Endothelial cell of umbilical vein (primary cell): ENCODE measurements at regions of chr3 and their contacts with region 1.

Region 1: DNA sequence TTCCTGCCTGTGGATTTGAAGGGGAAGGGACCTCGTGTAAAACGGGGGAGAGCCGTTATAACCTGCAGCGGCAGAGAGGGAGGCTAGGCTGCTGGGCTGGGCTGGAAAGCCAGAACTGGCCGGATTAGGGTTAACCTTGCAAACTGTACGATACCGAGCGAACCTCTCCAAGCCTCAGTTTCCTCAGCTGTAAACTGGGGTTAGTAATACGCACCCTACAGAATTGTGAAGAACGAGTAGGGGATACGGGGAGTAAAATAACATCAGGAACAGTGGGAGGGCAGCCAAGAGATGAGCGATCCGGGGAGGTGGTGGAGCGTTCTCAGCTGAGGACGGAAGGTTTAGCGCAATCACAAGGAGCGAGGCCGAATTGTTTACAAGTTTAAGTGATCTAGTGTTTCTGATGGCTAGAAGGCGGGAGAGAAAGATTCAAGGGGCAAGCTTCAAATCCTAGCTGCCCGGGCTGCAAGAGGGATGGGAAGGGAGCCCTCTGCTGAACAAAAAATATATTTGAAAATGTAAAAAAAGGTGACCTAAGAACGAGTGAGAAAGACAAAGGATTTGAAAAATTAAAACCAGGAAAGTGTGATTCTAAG is 768 bp upstream of the SEMA5B start:
- DNase-seq: peak; percentile 67
- H3K4me3 ChIP-seq: peak overlapping the region; percentile 18 to 20 (median 20)
- H3K27ac ChIP-seq: no peak overlapping the region
- H3K4me1 ChIP-seq: peaks cover 17% of the 10 kb centered on the region
- H3K27me3 ChIP-seq: peaks cover 72 to 90% of the 10 kb centered on the region in 2 experiments
- CTCF ChIP-seq: peak; percentile 32 to 40
- POLR2A ChIP-seq: no peak

Region 2: GRCh38 chr3:122392868-122393844 is 635.2 kb before region 1 on chr3:
- CTCF ChIA-PET with region 1: interaction called, 31 read pairs
- POLR2A ChIA-PET with region 1: no interaction called
- dilution Hi-C with region 1: no loop called
- intact Hi-C with region 1: loop called (anchors 2 kb)
- DNase-seq: peak; percentile 56
- H3K4me3 ChIP-seq: no peak overlapping the region
- H3K27ac ChIP-seq: no peak overlapping the region
- H3K4me1 ChIP-seq: peaks cover 4% of the 10 kb centered on the region
- H3K27me3 ChIP-seq: no peaks in the 10 kb centered on the region
- CTCF ChIP-seq: peak; percentile 56 to 61
- POLR2A ChIP-seq: no peak

Region 3: DNA sequence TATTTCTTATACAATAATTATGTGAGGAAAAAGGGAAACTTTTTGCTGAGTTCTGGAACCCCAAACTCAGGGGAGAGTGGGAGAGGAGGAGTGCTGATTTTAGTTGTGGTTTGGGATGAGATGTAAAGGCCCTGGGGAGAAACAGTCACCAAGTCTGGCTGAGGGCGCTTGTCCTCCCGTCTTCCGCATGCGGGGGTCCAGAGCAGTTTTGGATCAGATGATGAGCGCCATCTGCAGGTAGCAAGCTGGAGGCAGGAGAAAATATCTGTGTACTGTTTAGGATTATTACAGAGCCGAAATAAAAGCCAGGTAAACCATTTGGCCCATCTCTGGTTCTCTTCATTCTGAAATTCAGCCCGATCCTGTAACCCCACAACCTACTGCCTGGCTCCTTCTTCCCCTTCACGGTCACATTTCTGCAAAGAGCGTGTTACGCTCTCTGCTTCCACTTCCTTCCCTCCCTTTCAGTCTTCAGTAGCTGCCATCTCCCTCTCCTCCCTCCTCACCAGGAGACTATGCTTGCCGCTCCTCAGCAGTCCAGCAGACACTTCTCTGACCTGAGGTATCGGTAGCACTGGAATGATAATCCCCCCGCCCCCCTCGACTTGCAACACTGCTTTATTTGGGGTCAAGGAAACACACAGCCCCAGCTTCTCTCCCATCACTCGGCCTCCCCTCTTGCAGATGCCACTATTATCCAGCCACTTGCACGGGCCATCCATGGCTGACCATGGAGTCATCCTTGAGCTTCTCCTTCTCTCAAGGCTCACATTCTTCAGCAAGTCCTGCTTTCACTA is 349.0 kb before region 1 on chr3:
- CTCF ChIA-PET with region 1: no interaction called
- POLR2A ChIA-PET with region 1: no interaction called
- dilution Hi-C with region 1: no loop called
- intact Hi-C with region 1: loop called (anchors 5 kb)
- DNase-seq: peak; percentile 79
- H3K4me3 ChIP-seq: peak overlapping the region in 2 of 3 experiments; percentile 6 to 8
- H3K27ac ChIP-seq: peak overlapping the region; percentile 65
- H3K4me1 ChIP-seq: peaks cover 20% of the 10 kb centered on the region
- H3K27me3 ChIP-seq: no peaks in the 10 kb centered on the region
- CTCF ChIP-seq: peak; percentile 75 to 80
- POLR2A ChIP-seq: no peak

Region 4: GRCh38 chr3:122858373-122858772 is 170.0 kb before region 1 on chr3:
- CTCF ChIA-PET with region 1: interaction called, 3 read pairs
- POLR2A ChIA-PET with region 1: no interaction called
- dilution Hi-C with region 1: no loop called
- intact Hi-C with region 1: loop called (anchors 1 kb)
- DNase-seq: peak; percentile 45
- H3K4me3 ChIP-seq: no peak overlapping the region
- H3K27ac ChIP-seq: no peak overlapping the region
- H3K4me1 ChIP-seq: no peaks in the 10 kb centered on the region
- H3K27me3 ChIP-seq: no peaks in the 10 kb centered on the region
- CTCF ChIP-seq: peak in 1 of 2 donors; percentile 15
- POLR2A ChIP-seq: no peak

Region 5: DNA sequence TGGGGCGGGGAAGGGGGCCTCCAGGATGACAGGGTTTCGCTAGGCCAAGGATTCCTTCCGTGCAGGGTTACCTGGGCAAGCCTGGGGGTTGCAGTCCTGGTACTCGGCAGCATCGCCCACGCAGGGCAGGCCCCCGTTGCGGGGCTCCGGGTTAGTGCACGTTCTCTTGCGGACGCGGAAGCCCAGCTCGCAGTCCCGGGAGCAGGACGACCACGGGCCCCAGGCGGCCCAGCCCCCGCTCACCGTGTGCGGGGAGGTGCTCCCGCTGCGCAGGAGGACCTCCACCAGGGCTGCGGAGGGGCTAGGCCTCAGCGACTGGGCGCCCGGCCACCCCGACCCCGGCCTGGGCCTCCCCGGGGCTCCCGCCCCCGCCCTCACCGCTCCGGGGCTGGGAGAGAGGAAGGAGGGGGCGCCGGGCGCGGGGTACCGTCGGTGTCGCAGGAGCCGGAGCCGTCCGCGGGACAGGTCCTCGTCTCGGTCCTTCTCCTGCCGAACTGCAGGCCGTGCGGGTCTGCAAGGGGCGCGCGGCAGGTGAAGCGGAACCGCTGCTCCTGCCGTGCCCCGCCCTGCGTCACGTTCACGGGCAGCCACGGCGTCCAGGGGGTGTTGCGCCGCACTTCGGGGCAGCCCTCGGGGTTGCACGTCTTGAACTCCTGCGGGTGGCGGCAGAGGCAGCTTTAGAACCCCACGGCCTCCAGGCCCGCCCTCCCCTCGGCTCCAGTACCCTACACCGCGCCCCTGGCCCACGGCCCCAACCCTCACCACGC is 115.4 kb before region 1 on chr3:
- CTCF ChIA-PET with region 1: no interaction called
- POLR2A ChIA-PET with region 1: no interaction called
- dilution Hi-C with region 1: no loop called
- intact Hi-C with region 1: no loop called
- DNase-seq: no peak
- H3K4me3 ChIP-seq: no peak overlapping the region
- H3K27ac ChIP-seq: no peak overlapping the region
- H3K4me1 ChIP-seq: no peaks in the 10 kb centered on the region
- H3K27me3 ChIP-seq: peaks cover 3 to 12% of the 10 kb centered on the region in 2 experiments
- CTCF ChIP-seq: no peak
- POLR2A ChIP-seq: no peak

Region 6: DNA sequence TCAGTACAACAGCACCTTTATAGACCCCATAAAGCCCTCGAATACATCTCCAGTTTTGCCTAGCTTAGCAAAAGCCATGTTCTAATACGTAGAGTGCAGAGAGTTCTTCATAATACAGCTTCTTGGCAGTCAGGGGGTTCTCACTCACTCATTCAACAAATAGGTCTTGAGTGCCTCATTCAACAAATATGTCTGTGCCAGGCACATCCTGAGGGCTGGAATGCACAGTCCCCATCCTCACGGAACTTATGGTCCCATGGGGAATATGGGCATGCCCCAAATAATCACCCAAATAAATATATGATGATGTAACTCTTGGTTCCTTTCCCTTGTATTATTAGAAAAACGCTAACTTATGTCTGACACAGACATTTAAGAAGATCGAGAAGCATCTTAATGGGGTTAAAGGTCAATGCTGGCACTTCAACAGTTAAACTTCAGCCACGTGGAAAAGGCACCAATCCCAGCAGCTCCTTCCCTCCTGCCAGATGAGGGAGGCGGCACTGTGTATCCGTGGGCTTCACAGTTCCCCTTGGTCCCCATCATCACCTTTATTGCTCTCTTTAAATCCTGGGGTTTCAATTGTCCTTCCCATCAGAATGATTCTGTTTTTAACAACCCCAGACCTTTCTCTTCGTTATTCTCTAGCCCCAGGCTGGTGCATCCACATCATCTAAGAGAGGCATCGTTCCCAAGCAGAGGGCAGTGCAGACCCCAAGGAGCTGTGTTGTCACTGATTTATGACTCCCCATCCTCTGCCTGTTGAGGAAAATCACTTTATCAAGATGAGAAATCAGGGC is 18.1 kb after region 1 on chr3:
- CTCF ChIA-PET with region 1: interaction called, 12 read pairs
- POLR2A ChIA-PET with region 1: no interaction called
- dilution Hi-C with region 1: no loop called
- intact Hi-C with region 1: no loop called
- DNase-seq: no peak
- H3K4me3 ChIP-seq: no peak overlapping the region
- H3K27ac ChIP-seq: no peak overlapping the region
- H3K4me1 ChIP-seq: peaks cover 3% of the 10 kb centered on the region
- H3K27me3 ChIP-seq: peaks cover 5 to 12% of the 10 kb centered on the region in 2 experiments
- CTCF ChIP-seq: no peak
- POLR2A ChIP-seq: no peak

Region 7: DNA sequence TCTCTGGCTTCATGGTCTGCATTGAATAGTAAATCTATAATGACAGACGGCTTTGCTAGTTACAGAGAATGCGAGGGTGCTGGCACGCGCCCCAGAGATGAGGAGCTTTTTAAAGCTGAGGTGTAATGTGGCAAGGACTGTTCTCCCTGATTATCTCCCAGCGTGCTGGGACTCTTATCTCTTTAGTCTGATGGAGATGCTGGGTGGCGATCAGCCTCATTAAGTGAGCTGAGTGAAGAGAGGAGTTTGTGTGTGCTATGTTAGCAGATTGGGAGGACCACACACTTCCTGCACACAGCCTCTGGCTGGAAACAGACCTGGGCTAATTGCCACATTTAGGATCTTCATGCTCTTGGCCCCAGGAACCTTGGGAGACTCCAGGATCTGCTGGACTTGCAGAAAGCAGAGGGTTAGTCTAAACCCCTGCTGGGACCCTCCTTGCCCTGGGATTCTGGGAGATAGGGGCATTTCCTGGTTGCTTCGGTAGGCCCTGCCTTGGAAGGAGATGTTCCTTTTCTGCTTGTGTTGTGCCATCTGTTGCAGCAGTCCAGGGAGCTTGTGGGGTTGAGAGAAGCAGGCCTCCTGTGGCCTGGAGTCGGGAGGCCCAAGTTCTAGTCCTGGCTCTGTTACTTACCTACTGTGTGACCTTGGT is 53.5 kb after region 1 on chr3:
- CTCF ChIA-PET with region 1: interaction called, 6 read pairs
- POLR2A ChIA-PET with region 1: no interaction called
- dilution Hi-C with region 1: no loop called
- intact Hi-C with region 1: loop called (anchors 2 kb)
- DNase-seq: peak; percentile 38
- H3K4me3 ChIP-seq: no peak overlapping the region
- H3K27ac ChIP-seq: peak overlapping the region; percentile 60
- H3K4me1 ChIP-seq: peaks cover 73% of the 10 kb centered on the region
- H3K27me3 ChIP-seq: no peaks in the 10 kb centered on the region
- CTCF ChIP-seq: no peak
- POLR2A ChIP-seq: no peak

Region 8: DNA sequence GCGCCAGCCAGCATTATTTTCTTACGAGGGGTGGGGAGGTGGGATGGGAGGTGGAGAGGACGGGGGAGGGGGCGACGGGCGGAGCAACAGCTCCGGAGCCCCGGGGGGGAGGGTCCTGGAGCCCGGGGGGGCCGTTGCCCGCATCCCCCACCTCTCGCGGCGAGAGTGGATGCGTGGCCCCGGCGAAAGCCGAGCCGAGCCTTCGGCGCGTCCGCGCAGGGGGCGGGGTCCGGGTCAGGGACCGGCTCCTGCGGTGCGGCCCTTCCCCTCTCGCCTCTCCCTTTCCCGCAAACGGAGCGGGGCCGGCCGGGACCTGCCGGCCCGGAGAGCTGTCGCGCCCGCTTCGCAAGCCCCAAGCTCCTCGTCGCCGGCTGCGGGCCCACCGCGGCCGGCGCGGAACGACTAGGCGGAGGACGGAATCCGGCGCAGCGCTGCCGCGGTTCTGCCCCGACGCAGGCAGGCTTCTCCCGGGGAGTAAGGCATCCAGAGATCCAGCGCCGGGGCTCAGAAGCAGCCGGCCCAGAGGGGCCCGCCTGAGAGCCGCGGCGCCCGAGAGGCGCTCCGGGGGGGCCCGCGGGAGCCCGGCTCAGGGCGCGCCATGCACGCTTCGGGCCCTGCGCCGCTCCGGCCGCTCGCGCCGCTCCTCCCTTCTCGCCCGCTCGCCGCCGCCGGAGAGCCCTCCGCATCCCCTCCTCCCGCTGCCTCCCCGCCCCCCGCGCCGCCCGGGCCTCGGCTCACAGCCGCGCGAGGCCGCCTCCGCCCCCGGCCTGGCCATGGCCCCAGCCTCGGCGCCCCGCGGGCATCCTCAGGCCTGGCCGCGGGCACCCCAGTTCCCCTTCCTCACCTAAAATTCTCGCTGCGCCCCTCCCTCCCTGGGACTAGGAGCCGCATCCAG is 421.0 kb after region 1 on chr3:
- CTCF ChIA-PET with region 1: no interaction called
- POLR2A ChIA-PET with region 1: no interaction called
- dilution Hi-C with region 1: no loop called
- intact Hi-C with region 1: no loop called
- DNase-seq: peak; percentile 4
- H3K4me3 ChIP-seq: peak overlapping the region in 2 of 3 experiments; percentile 32 to 38
- H3K27ac ChIP-seq: no peak overlapping the region
- H3K4me1 ChIP-seq: no peaks in the 10 kb centered on the region
- H3K27me3 ChIP-seq: peaks cover 38 to 58% of the 10 kb centered on the region in 2 experiments
- CTCF ChIP-seq: no peak
- POLR2A ChIP-seq: no peak